ENCODE measurements at regions of chr7 and their contacts with region 1.

Region 1: GRCh38 chr7:40134428-40135316 is at the starts of genes MPLKIP and SUGCT:
- DNase-seq: peak; percentile 80
- H3K4me3 Mint-ChIP-seq: peak within 1 kb of the TSS; percentile 91
- H3K27ac Mint-ChIP-seq: peak within 1 kb of the TSS; percentile 96
- H3K4me1 Mint-ChIP-seq: peaks cover 19% of the 10 kb centered on the region
- H3K27me3 Mint-ChIP-seq: peaks cover 13% of the 10 kb centered on the region
- total RNA-seq, gene MPLKIP: 36.0 and 36.3 TPM in 2 replicates
- total RNA-seq, gene SUGCT: 0.93 TPM in 1 of 2 replicates, not detected in the other

Region 2: GRCh38 chr7:38908759-38909335 is 1225.8 kb before region 1 on chr7 and contains the start of gene VPS41:
- intact Hi-C with region 1: loop called (anchors 1 kb)
- DNase-seq: peak; percentile 72
- H3K4me3 Mint-ChIP-seq: peak within 1 kb of the TSS; percentile 97
- H3K27ac Mint-ChIP-seq: peak within 1 kb of the TSS; percentile 93
- H3K4me1 Mint-ChIP-seq: peaks cover 38% of the 10 kb centered on the region
- H3K27me3 Mint-ChIP-seq: peaks cover 2% of the 10 kb centered on the region
- total RNA-seq, gene VPS41: 52.9 and 56.3 TPM in 2 replicates

Region 3: GRCh38 chr7:39580149-39580874 is 554.4 kb before region 1 on chr7:
- intact Hi-C with region 1: loop called (anchors 2 kb)
- DNase-seq: peak; percentile 63
- H3K4me3 Mint-ChIP-seq: no peak overlapping the region
- H3K27ac Mint-ChIP-seq: peak overlapping the region; percentile 64
- H3K4me1 Mint-ChIP-seq: peaks cover 10% of the 10 kb centered on the region
- H3K27me3 Mint-ChIP-seq: no peaks in the 10 kb centered on the region

Region 4: DNA sequence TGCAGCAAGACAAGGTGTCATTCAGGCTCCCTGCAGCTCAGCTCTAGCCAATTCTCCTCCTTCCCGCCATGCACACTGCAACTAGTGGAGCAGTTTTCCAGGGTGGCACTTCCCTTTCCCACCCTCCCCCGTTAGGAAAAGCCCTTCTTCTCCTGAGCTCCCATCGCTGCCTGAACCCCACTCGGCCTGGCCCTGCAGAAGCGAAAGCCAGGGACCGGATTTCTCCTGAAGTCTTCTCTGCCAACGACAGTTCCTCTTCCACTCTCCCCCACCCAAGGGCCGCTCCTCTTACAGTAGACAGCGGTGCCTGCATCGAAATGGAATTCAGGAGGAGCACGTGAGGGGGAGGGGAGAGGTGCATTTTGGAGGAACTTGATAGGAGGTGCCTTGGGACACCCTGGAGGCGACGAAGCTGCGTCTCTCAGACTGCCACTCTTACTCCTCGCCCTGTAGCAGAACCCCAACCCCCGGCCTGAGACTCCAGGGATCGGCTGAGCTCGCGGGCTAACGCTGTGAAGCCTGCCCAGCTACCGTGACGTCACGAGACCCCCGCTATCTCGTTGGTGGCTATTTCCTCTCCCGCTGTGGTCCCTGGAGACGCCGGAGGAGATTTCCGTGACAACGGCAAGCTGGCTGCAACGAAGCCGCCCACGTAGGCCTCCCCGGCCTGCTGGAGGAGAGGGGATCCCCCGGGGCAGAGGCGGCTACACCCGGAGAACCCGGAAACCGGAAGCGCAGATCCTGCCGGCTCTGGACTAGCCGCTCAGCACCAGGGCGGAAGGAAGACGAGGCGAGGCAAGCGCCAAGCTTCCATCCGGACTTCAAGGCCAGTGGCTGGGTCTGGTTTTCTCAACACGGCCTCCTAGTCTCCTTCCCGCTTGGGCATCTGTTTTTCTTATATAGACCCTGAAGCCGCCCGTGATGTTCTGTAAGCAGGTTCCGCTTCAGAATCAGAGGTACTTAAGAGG is 401.6 kb before region 1 on chr7:
- intact Hi-C with region 1: loop called (anchors 1 kb)
- DNase-seq: peak; percentile 97
- H3K4me3 Mint-ChIP-seq: peak overlapping the region; percentile 86
- H3K27ac Mint-ChIP-seq: peak overlapping the region; percentile 95
- H3K4me1 Mint-ChIP-seq: peaks cover 46% of the 10 kb centered on the region
- H3K27me3 Mint-ChIP-seq: peaks cover 6% of the 10 kb centered on the region

Region 5: DNA sequence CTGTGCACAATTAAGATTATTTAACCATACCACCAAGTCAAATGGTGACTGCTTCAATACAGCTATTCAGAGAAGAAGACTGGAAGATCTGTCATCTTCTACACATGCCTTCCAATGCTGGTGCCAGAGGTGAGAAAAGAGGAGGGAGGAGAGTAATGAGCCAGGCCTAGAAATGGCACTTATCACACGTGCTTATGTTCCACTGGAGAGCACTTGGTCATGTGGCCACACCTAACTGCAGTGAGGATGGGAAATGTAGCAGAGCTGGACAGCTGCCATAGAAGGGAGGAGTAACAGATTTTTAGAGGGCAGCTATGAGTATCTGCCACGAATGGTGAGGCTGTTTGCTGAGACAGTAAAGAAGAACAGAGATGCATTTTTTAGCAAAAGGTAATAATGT is 77.4 kb before region 1 on chr7:
- intact Hi-C with region 1: loop called (anchors 5 kb)
- DNase-seq: no peak
- H3K4me3 Mint-ChIP-seq: no peak overlapping the region
- H3K27ac Mint-ChIP-seq: no peak overlapping the region
- H3K4me1 Mint-ChIP-seq: peaks cover 4% of the 10 kb centered on the region
- H3K27me3 Mint-ChIP-seq: no peaks in the 10 kb centered on the region

Measured in activated T-helper 1 cell treated with anti-CD3 and anti-CD28 coated beads, Interleukin-12 subunit alpha, Interleukin-12 subunit beta, Interleukin-2, Interleukin-4 antibody, amounts not matched to agents 30 ng/mL and 10 ng/mL and 1 ng/mL, durations not matched to agents 14 hours and 24 hours and 36 hours (primary cell).